HEK293 (cell line): ENCODE measurements at regions of chr7 and their contacts with region 1.

Region 1: DNA sequence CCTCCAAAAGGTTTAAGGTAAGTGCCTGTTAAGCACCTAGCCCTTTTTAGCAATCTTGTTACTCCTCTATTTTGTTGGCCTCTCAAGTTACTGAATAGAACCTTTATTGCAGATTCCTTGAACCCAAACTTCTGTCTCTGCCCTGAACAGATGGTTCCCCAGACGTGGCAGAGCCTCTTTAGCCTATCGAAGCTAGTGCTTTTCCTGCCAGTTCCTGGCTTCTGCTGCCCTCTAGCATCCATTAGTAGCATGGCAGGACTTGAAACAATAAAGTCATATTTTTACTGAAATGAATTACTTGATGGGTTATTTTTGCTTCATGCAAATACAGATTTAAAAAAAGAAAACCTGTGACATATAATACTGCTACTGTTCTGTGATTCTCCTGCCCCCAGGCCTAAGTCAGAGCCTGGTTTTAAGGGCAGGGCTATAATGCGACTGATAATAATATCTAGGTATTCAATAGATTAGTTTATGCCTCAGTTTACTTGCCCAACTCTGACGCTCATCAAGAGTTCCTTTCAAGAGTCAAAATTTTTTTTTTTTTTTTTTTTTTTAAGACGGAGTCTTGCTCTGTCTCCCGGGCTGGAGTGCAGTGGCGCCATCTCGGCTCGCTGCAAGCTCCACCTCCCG is 84.3 kb upstream of the PHF14 start:
- H3K4me3 ChIP-seq: no peak overlapping the region
- H3K27ac ChIP-seq: no peak overlapping the region
- H3K4me1 ChIP-seq: no peaks in the 10 kb centered on the region
- CTCF ChIP-seq: no peak

Region 2: GRCh38 chr7:10855583-10855982 is 33.8 kb before region 1 on chr7:
- CTCF ChIA-PET with region 1: interaction called, 10 read pairs
- POLR2A ChIA-PET with region 1: no interaction called
- H3K4me3 ChIP-seq: no peak overlapping the region
- H3K27ac ChIP-seq: no peak overlapping the region
- H3K4me1 ChIP-seq: no peaks in the 10 kb centered on the region
- CTCF ChIP-seq: no peak